ENCODE measurements at regions of chr1 and their contacts with region 1.

Region 1: GRCh38 chr1:155250633-155251449 is 4.4 kb downstream of the ENTREP3 start:
- DNase-seq: peak; percentile 98

Region 2: GRCh38 chr1:155261852-155262673 is 11.2 kb after region 1 on chr1 and contains the start of gene SCAMP3:
- CTCF ChIA-PET with region 1: interaction called, 13 read pairs
- POLR2A ChIA-PET with region 1: interaction called, 25 read pairs
- DNase-seq: peak; percentile 98

Region 3: DNA sequence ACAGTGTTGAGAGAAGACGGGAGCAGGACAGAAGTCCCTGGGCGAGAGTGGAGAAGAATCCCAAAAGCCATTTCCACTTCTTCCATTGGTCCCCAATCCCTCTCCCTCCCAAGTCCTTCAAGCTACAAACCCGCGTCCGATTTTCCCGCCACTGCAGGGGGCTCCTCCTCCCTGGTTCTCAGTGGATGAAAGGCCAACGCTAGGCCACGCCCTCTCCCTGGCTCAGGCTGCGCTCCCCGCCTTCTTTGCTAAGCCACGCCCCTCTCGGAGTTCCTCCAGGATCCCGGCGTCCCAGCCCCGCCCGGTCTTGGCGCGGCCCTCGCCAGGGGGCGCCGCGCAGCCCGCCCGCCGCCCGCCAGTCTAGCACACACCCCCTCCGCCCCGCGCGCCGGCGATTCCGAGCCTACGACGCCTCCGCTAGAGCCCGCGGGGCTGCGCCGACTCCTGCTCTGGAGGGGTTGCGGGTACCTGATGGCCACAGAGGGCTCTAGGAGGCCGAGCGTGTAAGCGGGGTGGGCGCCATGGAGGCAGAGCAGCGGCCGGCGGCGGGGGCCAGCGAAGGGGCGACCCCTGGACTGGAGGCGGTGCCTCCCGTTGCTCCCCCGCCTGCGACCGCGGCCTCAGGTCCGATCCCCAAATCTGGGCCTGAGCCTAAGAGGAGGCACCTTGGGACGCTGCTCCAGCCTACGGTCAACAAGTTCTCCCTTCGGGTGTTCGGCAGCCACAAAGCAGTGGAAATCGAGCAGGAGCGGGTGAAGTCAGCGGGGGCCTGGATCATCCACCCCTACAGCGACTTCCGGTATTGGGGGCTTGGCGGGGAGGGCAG is 26.4 kb after region 1 on chr1 and contains the start of gene HCN3:
- CTCF ChIA-PET with region 1: interaction called, 15 read pairs
- POLR2A ChIA-PET with region 1: interaction called, 35 read pairs
- DNase-seq: peak; percentile 100

Region 4: GRCh38 chr1:155316922-155317321 is 66.1 kb after region 1 on chr1:
- CTCF ChIA-PET with region 1: interaction called, 62 read pairs
- POLR2A ChIA-PET with region 1: interaction called, 43 read pairs
- DNase-seq: no peak

Region 5: DNA sequence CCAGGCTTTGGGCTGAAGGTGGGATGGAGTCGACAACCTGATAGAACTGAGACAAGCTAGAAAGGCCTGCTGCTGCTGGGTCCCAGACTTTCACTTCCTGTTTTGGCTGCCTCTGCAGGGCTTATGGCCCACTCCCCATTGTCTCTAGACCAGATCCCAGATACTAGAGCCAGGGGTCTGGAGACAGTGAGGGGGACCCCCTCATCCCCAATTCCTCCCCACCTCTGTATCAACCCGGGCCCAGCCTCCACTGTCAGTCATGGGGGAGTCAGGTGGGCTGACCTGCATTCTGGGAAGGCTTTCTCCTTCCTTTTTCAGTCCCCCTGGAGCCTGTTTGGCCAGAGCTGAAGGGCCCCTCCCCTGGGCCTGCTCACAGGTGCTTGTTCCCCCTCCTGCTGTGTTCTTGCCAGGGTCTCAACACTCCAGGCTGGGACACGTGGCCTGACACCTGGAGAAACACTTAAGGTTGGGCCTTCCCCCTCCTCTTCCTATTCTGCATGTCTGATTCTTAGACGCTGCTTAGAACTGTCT is 1866.8 kb after region 1 on chr1:
- CTCF ChIA-PET with region 1: no interaction called
- POLR2A ChIA-PET with region 1: no interaction called
- DNase-seq: no peak

Measured in HEK293T (cell line).